Breast epithelium (tissue), 4 donors: ENCODE measurements at regions of chr5 and their contacts with region 1.

Region 1: GRCh38 chr5:64773533-64773932 is 4.8 kb downstream of the CWC27 start:
- DNase-seq: no peak
- H3K4me3 ChIP-seq: no peak overlapping the region
- H3K27ac ChIP-seq: no peak overlapping the region
- H3K4me1 ChIP-seq: peaks cover 0 to 12% of the 10 kb centered on the region in 2 donors
- H3K27me3 ChIP-seq: no peaks in the 10 kb centered on the region
- CTCF ChIP-seq: no peak
- POLR2A ChIP-seq: no peak

Region 2: DNA sequence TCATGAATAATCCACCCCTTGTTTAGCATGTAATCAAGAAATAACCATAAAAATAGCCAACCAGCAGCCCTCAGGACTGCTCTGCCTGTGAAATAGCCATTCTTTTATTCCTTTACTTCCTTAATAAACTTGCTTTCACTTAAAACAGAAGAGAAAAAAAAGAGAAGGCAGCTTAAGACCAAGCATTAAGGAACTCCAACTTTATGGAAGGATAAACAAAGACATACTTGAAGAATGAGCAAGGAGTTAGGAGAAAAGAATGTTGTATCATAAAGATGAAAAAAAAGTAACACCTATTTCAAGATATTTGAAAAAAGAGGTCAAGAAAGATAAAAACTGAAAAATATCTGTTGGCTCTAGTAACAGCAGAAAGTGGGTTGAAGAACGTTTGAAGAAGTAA is 500.3 kb before region 1 on chr5:
- intact Hi-C with region 1: no loop called
- DNase-seq: no peak
- H3K4me3 ChIP-seq: no peak overlapping the region
- H3K27ac ChIP-seq: no peak overlapping the region
- H3K4me1 ChIP-seq: no peaks in the 10 kb centered on the region
- H3K27me3 ChIP-seq: no peaks in the 10 kb centered on the region
- CTCF ChIP-seq: no peak
- POLR2A ChIP-seq: no peak

Region 3: GRCh38 chr5:64606926-64607325 is 166.6 kb before region 1 on chr5:
- intact Hi-C with region 1: loop called (anchors 5 kb)
- DNase-seq: no peak
- H3K4me3 ChIP-seq: no peak overlapping the region
- H3K27ac ChIP-seq: no peak overlapping the region
- H3K4me1 ChIP-seq: no peaks in the 10 kb centered on the region
- H3K27me3 ChIP-seq: no peaks in the 10 kb centered on the region
- CTCF ChIP-seq: no peak
- POLR2A ChIP-seq: no peak